Activated CD4-positive, alpha-beta memory T cell treated with anti-CD3 and anti-CD28 coated beads for 36 hours (primary cell): ENCODE measurements at regions of chr20 and their contacts with region 1.

Region 1: DNA sequence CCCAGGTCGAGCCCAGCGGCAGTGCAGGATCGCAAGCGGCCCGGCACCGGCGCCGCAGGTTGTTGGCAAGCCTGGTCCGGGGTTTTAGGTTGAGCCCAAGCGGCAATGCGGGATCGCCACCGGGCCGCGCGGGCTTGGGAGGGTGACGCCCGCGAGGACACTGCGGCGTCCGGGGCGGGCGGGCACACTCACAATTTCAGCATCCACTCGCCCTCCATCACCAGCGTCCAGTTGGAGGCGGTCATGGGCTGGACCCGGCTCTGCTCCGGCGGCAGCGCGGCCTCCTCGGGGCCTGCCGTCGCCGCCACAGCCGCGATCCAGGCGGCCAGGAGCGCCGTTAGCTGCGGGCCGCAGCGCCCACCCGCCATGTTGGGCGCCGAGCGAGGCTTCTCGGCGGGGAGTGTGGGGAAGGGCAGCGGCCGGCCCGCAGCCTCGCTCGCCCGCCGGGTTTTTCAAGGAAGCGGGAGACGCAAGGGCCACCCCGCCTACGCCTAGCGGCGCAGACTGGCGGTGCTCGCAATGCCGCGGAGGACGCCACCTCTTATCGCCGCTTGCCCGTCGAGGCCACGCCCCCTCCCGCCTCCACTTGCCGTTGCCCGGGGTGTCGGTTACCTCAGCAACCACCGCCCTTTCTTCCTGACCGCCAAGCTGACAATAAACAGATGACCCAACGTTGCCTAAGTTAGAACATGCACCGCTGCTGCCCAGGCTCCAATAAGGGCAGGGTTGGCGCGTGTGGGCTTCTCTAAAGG is at the start of gene TMX4:
- DNase-seq: peak; percentile 95
- H3K4me3 Mint-ChIP-seq: peak within 1 kb of the TSS; percentile 93
- H3K27ac Mint-ChIP-seq: peak within 1 kb of the TSS; percentile 87
- H3K4me1 Mint-ChIP-seq: peaks cover 30% of the 10 kb centered on the region
- H3K27me3 Mint-ChIP-seq: no peaks in the 10 kb centered on the region
- total RNA-seq, gene TMX4: 33.2 to 35.9 TPM

Region 2: GRCh38 chr20:7980332-7981046 is 38.9 kb before region 1 on chr20:
- CTCF ChIA-PET with region 1: no interaction called
- POLR2A ChIA-PET with region 1: no interaction called
- intact Hi-C with region 1: loop called (anchors 1 kb)
- DNase-seq: peak; percentile 44
- H3K4me3 Mint-ChIP-seq: no peak overlapping the region
- H3K27ac Mint-ChIP-seq: peak overlapping the region; percentile 43
- H3K4me1 Mint-ChIP-seq: peaks cover 12% of the 10 kb centered on the region
- H3K27me3 Mint-ChIP-seq: no peaks in the 10 kb centered on the region

Region 3: GRCh38 chr20:8033151-8033841 is 13.9 kb after region 1 on chr20:
- CTCF ChIA-PET with region 1: no interaction called
- POLR2A ChIA-PET with region 1: no interaction called
- intact Hi-C with region 1: no loop called
- DNase-seq: no peak
- H3K4me3 Mint-ChIP-seq: no peak overlapping the region
- H3K27ac Mint-ChIP-seq: no peak overlapping the region
- H3K4me1 Mint-ChIP-seq: no peaks in the 10 kb centered on the region
- H3K27me3 Mint-ChIP-seq: no peaks in the 10 kb centered on the region

Region 4: DNA sequence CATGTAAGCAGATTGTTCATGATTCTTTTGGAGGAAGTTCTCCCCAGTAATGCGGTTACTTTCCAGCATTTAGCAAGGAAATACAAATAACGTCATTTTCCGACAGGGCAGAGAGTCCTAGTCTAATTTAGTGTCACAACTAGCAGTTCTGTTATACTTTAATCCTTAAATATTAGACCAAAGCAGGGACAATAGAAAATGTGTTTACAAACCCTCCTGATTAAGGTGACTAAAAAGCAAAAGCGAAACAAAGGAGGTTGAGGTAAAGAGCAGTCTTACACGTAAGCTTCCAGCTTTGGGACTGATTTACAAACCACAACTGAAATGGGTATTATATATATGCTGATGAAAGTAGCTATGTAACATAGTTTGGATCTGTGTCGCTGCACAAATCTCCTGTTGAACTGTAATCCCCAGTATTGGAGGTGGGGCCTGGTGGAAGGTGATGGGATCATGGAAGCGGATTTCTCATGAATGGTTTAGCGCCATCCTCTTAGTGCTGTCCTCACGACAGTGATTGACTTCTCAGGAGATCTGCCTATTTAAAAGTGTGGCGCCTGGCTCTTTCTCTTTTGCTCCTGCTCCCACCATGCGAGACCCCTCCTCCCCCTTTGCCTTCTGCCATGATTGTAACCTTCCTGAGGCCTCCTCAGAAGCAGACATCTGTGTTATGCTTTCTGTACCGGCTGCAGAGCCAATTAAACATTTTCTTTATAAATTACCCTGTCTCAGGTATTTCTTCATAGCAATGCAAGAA is 194.6 kb after region 1 on chr20:
- CTCF ChIA-PET with region 1: no interaction called
- POLR2A ChIA-PET with region 1: no interaction called
- intact Hi-C with region 1: loop called (anchors 5 kb)
- DNase-seq: no peak
- H3K4me3 Mint-ChIP-seq: peak overlapping the region; percentile 55
- H3K27ac Mint-ChIP-seq: peak overlapping the region; percentile 24
- H3K4me1 Mint-ChIP-seq: peaks cover 45% of the 10 kb centered on the region
- H3K27me3 Mint-ChIP-seq: peaks cover 2% of the 10 kb centered on the region

Region 5: DNA sequence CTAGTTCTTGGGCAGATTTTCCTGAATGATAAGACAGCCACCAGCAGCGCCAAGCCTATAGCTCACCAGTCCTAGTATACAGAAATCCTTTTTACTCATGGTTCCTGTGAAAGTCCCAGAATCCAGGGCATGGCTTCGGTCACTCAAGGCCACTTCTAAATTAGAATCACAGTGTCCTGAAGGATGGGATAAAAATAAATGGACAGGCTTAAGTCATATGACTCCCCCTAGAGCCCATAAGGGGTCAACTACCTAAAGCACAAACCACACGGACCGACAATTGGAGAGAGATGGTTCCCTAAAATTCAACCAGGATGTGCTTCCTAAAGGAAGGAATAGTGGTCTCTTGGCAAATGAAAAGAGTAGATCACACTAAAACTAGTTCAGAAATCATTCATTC is 645.4 kb after region 1 on chr20:
- CTCF ChIA-PET with region 1: no interaction called
- POLR2A ChIA-PET with region 1: no interaction called
- intact Hi-C with region 1: loop called (anchors 10 kb)
- DNase-seq: no peak
- H3K4me3 Mint-ChIP-seq: no peak overlapping the region
- H3K27ac Mint-ChIP-seq: no peak overlapping the region
- H3K4me1 Mint-ChIP-seq: peaks cover 4% of the 10 kb centered on the region
- H3K27me3 Mint-ChIP-seq: no peaks in the 10 kb centered on the region